Motor neuron (in vitro differentiated cells): ENCODE measurements at regions of chr1 and their contacts with region 1.

Region 1: DNA sequence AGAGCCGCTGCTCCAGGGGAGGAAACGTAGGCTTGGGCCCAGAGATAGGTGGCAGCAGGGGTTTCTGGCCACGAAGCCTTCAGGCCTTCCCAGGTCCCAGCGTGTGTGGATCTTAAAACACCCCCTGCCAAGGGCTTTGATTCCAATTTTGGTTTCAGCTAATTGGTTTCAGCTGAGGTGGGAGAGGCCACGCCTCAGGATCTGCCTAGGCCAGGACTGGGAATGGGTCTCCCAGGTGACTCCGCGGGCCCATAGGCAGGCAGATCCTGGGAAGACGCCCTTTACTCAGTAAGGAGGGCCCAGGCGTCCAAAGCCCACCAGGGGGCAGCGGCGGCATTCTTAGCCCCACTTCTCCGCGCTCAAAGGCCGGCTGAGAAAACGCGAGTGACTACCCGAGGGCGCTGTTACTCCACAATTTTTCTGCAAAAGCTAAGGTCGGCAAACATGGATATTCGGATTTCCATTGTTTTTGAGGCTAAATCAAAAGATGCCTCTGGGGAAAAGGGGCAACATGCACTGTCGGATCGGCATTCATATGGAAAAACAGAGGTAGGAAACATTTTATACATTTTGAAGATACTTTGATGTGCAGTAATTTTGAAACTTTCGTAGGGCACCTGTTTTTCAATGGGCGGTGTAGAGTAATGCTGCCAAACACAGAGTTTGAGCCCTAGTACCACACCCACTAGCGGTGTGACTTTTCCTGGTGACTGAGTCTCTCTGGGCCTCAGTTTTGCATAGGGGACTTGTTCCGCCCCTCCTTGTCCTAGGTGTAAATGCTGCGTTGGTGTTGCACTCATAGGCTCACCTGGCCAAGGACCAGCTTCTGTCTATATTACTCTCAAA is 31.8 kb upstream of the BCL10 start:
- ATAC-seq: peak; percentile 98 to 100 (median 100)
- H3K4me3 ChIP-seq: no peak overlapping the region
- H3K27ac ChIP-seq: no peak overlapping the region
- H3K4me1 ChIP-seq: no peaks in the 10 kb centered on the region

Region 2: GRCh38 chr1:83864991-83865390 is 1443.2 kb before region 1 on chr1:
- in situ Hi-C with region 1: no loop called
- ATAC-seq: peak in 2 of 8 experiments; percentile 33 to 75
- H3K4me3 ChIP-seq: no peak overlapping the region
- H3K27ac ChIP-seq: no peak overlapping the region
- H3K4me1 ChIP-seq: no peaks in the 10 kb centered on the region

Region 3: GRCh38 chr1:85387781-85388180 is 79.6 kb after region 1 on chr1:
- in situ Hi-C with region 1: no loop called
- ATAC-seq: no peak
- H3K4me3 ChIP-seq: no peak overlapping the region
- H3K27ac ChIP-seq: no peak overlapping the region
- H3K4me1 ChIP-seq: no peaks in the 10 kb centered on the region

Region 4: GRCh38 chr1:85502625-85503083 is 194.4 kb after region 1 on chr1:
- in situ Hi-C with region 1: loop called in 2 of 9 experiments (anchors 25 kb)
- ATAC-seq: peak in 4 of 8 experiments; percentile 12 to 98 (median 98)
- H3K4me3 ChIP-seq: no peak overlapping the region
- H3K27ac ChIP-seq: no peak overlapping the region
- H3K4me1 ChIP-seq: no peaks in the 10 kb centered on the region

Region 5: DNA sequence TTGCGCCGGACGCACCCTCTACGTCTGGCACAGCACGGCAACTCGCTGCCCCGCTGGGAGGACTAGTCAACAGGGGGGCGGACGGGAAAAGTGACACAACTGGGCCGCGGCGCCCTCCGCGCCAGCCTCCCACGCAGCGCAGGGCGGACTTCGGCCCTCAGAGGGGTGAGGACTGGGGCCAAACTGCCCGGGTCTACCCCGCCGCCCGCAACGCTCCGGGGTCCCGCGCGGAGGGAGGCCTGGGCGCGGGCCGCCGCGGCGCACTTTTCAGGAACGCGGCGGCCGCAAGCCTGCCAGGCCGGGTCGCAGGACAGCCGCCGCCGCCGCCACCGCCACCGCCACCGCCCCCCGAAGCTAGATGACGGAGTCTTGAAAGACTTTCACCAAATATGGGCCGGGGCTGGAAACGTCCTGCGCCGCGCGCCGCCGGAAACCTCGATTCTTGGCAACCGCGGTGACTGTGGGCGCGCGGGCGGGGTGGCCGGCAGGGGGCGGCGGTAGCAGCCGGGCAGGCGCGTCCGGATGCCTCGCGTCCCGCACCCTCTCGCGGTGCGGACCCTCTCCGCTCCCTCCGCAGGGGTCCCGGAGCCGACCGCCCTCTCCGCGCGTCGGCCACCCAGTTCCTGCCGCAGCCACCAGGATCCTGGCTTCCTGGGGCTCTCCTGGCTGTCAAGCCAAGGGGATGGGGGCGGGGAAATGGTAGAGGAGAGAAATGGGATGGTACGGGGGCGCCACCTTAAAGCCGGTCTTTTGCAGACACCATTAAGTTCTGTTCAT is 268.6 kb after region 1 on chr1:
- in situ Hi-C with region 1: loop called in 2 of 9 experiments (anchors 25 kb)
- ATAC-seq: peak; percentile 38 to 72 (median 62)
- H3K4me3 ChIP-seq: peak overlapping the region; percentile 43 to 63 (median 58)
- H3K27ac ChIP-seq: peak overlapping the region in 1 of 2 donors; percentile 31
- H3K4me1 ChIP-seq: peaks cover 2 to 4% of the 10 kb centered on the region in 2 donors

Region 6: DNA sequence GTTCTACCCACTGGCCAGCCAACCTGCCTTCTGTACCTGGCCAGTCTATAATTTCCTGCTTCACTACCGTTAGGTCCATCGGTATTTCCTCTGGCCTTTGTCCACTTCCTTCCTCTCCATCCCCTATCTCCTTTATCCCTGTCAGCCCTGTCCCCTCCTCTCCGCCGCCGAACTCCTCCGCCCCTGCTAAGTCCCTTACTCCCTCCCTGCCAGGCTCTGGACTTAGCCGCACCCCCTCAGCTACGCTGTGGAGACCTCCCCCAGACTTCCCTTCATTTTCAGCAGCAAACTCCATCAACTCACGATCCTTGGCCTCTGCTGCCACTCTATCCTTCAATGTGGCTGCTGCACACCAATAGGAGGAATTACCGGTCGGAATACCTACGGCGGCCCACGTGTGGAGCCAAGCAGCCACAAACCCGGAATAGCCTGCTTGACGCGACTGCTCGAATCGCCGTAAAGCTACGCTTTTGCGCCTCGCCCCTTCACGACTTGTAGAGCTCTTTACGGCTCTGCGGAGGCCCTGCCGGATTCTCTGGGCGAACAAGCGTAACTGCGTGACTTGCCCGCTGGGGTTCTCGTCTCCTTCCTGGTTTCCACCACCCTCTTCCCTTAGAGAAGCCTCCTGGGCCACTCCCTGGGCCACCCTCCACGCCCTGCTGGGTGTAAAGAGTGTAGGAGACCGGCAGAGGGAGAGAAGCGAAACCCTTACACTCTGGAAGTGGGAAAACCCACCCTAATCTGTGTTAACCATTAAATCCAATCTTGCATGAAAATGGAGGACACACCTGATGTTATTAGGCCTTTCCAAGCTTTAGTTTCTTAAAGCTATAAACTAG is 400.0 kb after region 1 on chr1 and contains the start of gene ZNHIT6:
- in situ Hi-C with region 1: loop called in 1 of 9 experiments (anchors 25 kb)
- ATAC-seq: peak; percentile 95 to 97 (median 96)
- H3K4me3 ChIP-seq: peak within 1 kb of the TSS; percentile 47 to 89 (median 73)
- H3K27ac ChIP-seq: peak within 1 kb of the TSS; percentile 64 to 82
- H3K4me1 ChIP-seq: peaks cover 9 to 19% of the 10 kb centered on the region in 2 donors
- total RNA-seq, gene ZNHIT6: 17.4 to 31.0 (median 24.0) TPM

Region 7: GRCh38 chr1:86018283-86018923 is 710.2 kb after region 1 on chr1:
- in situ Hi-C with region 1: loop called in 4 of 9 experiments (anchors 25 kb)
- ATAC-seq: peak in 4 of 8 experiments; percentile 37 to 64 (median 46)
- H3K4me3 ChIP-seq: no peak overlapping the region
- H3K27ac ChIP-seq: no peak overlapping the region
- H3K4me1 ChIP-seq: no peaks in the 10 kb centered on the region